ENCODE measurements at regions of chr1 and their contacts with region 1.

Region 1: GRCh38 chr1:91511386-91511785 is 10.7 kb downstream of the CDC7 start:
- DNase-seq: no peak
- ATAC-seq: peak in 1 of 2 donors; percentile 56
- H3K4me3 ChIP-seq: no peak overlapping the region
- H3K27ac ChIP-seq: no peak overlapping the region
- H3K4me1 ChIP-seq: no peaks in the 10 kb centered on the region
- H3K27me3 ChIP-seq: no peaks in the 10 kb centered on the region
- CTCF ChIP-seq: peak in 4 of 5 experiments; percentile 48 to 61 (median 58)
- POLR2A ChIP-seq: no peak

Region 2: GRCh38 chr1:91335603-91336002 is 175.8 kb before region 1 on chr1:
- in situ Hi-C with region 1: no loop called
- intact Hi-C with region 1: no loop called
- DNase-seq: no peak
- ATAC-seq: no peak
- H3K4me3 ChIP-seq: no peak overlapping the region
- H3K27ac ChIP-seq: no peak overlapping the region
- H3K4me1 ChIP-seq: no peaks in the 10 kb centered on the region
- H3K27me3 ChIP-seq: no peaks in the 10 kb centered on the region
- CTCF ChIP-seq: no peak
- POLR2A ChIP-seq: no peak

Region 3: DNA sequence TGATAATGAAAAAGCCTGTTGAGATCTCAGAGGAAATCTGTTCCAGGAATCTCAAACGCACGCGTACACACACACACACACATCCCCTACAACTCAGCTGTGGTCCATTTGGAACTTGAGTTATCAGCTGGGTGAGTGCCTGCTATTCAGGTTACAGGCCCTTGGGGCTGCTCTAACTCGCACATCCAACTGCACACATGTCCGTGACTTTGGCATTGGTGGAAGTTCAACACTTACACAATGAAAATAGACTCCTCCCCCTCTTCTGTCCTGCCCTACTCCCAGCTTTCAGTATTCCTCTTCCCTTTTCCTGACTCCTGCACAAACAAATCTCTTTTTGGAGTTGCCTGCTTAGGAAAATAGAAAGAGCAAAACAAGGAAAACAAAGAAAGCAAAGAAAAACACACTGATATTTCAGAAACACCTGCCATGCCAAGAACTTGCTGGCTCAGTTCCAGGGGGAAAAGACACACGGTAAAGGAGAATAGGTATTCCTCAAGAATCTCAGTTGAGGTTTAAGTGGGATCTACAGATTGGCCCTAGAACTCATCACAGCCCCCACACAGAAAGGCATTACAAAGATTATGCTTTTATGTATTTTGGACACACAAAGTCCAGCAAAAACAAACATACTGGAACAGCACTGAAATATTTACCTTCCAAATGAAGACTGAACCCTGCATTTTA is 233.7 kb after region 1 on chr1:
- in situ Hi-C with region 1: loop called in 1 of 4 experiments (anchors 5 kb)
- intact Hi-C with region 1: no loop called
- DNase-seq: peak; percentile 70 to 77
- ATAC-seq: peak; percentile 71 to 90
- H3K4me3 ChIP-seq: no peak overlapping the region
- H3K27ac ChIP-seq: peak overlapping the region; percentile 40 to 69 (median 56)
- H3K4me1 ChIP-seq: peaks cover 61 to 64% of the 10 kb centered on the region in 2 donors
- H3K27me3 ChIP-seq: no peaks in the 10 kb centered on the region
- CTCF ChIP-seq: no peak
- POLR2A ChIP-seq: no peak

Region 4: GRCh38 chr1:91795591-91796389 is 284.4 kb after region 1 on chr1:
- in situ Hi-C with region 1: no loop called
- intact Hi-C with region 1: loop called (anchors 10 kb)
- DNase-seq: no peak
- ATAC-seq: no peak
- H3K4me3 ChIP-seq: no peak overlapping the region
- H3K27ac ChIP-seq: peak overlapping the region in 3 of 4 donors; percentile 35 to 64 (median 59)
- H3K4me1 ChIP-seq: peaks cover 71 to 79% of the 10 kb centered on the region in 2 donors
- H3K27me3 ChIP-seq: no peaks in the 10 kb centered on the region
- CTCF ChIP-seq: no peak
- POLR2A ChIP-seq: no peak

Region 5: GRCh38 chr1:91924146-91924545 is 412.8 kb after region 1 on chr1:
- in situ Hi-C with region 1: loop called (anchors 5 to 10 kb)
- intact Hi-C with region 1: loop called (anchors 1 kb)
- DNase-seq: no peak
- ATAC-seq: no peak
- H3K4me3 ChIP-seq: no peak overlapping the region
- H3K27ac ChIP-seq: no peak overlapping the region
- H3K4me1 ChIP-seq: no peaks in the 10 kb centered on the region
- H3K27me3 ChIP-seq: no peaks in the 10 kb centered on the region
- CTCF ChIP-seq: no peak
- POLR2A ChIP-seq: no peak

Region 6: DNA sequence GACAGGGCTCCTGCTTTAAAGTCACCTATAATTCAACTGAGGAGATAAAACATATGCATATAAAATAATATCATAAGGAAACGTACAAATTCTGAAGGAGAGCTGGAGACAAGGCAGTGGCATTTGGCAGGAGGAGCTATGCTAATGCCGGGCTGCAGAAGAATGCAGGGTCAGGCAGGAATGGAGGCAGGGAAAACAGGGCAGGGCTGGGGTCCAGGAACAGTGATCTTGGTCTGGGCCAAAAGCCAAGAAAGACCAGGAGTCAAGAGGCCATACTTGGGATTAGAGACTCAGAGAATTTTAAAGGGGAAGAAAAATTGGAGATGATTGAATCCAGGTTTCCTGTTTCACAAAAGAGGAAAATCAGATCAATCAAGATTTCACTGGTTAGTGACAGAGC is 417.9 kb after region 1 on chr1:
- in situ Hi-C with region 1: loop called (anchors 5 to 10 kb)
- intact Hi-C with region 1: loop called (anchors 1 kb)
- DNase-seq: no peak
- ATAC-seq: no peak
- H3K4me3 ChIP-seq: no peak overlapping the region
- H3K27ac ChIP-seq: no peak overlapping the region
- H3K4me1 ChIP-seq: no peaks in the 10 kb centered on the region
- H3K27me3 ChIP-seq: no peaks in the 10 kb centered on the region
- CTCF ChIP-seq: no peak
- POLR2A ChIP-seq: no peak

Region 7: DNA sequence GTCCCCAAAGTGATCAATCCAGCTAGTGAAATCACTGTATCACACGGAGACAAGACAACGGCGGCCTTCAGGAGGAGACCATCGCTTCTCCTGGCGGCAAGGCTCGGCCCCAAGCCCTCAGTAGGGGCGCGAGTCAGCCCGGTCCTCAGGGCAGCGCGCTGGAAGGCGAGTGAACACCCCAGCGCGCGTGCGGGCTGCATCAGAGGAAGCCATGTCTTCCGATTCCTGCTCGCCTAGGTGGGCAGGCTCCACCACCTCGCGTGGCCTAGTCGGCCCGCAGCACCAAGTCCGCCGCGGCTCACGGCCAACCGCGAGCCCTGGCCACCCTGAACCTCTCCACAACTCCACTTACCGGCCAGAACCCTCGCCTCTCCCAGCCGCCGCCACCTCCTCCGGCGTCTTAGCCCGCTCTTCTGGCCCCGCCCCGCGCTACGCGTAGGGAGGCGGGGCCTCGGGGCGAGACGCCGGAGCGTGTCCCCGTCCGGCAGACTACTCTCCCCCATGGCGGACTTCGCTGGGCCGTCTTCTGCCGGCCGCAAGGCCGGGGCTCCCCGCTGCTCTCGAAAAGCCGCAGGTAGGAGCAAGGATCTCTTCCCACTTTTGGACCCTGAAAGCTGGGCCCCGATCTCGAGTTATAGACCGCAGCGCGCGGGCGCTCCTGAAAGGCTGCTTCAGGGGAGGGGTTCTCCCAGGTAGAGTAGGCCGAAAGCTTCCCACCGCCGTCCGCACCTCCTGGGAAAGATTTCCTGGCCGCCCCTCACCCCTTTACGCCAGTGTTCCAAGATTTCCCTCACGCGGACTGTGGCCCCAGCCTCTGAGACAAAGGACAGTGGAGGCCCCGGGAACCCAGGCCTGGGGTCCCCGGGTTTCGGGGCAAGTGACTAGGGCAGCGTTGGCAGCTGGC is 787.4 kb after region 1 on chr1 and contains the starts of genes GLMN and RPAP2:
- in situ Hi-C with region 1: loop called in 1 of 4 experiments (anchors 25 kb)
- intact Hi-C with region 1: loop called (anchors 10 kb)
- DNase-seq: peak; percentile 49 to 65
- ATAC-seq: peak; percentile 97 to 98
- H3K4me3 ChIP-seq: peak within 1 kb of the TSS; percentile 80 to 95 (median 90)
- H3K27ac ChIP-seq: peak within 1 kb of the TSS; percentile 89 to 96 (median 94)
- H3K4me1 ChIP-seq: peaks cover 13 to 16% of the 10 kb centered on the region in 2 donors
- H3K27me3 ChIP-seq: no peaks in the 10 kb centered on the region
- CTCF ChIP-seq: no peak
- POLR2A ChIP-seq: peak; percentile 72 to 73
- total RNA-seq, gene GLMN: 2.6 to 9.5 (median 5.2) TPM
- total RNA-seq, gene RPAP2: 11.4 to 19.1 (median 14.7) TPM

Measured in gastrocnemius medialis (tissue), 4 donors.